ENCODE measurements at regions of chr10 and their contacts with region 1.

Region 1: DNA sequence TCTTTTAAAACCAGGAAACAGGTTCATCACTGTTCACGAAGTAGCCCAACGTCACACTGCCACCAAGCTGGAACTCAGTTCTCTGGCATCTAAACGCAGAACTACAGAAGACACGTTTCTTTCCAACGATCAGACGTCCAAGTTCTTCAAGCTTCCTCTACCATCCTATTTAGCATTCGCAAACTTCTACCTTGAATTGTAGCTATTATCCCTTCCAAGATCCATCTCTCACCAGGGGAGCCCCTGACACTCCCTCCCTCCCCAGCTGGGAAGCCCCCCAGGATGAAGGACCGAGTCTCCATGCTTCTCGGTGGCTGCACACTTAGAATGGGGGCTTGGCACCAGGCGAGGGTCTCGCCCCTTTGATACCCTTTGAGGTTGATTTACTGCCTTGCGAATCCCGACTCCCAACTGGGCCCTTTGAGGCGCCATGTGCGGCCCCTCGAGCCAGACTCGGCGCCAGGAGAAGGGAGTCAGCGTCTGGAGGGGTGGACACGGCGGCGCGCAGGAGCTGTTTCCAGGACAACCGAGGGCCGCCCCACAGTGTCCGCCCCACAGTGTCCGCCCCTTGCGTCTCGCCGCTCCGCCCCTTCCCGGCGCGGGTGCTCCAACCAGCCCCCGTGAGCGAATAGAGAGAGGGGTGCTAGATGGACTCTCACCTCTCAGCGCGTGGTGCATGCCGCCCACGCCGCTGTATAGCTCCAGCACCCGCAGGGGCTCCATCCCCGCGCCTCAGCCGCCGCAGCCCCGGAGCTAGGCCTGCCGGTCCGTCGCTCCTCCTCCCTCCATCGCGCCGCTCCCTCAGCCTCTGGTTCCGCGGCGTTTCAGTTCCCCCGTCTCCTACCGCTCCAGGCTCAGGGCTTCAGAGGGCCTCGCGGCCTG is at the start of gene TRDMT1:
- DNase-seq: peak; percentile 83 to 91 (median 85)
- H3K4me3 ChIP-seq: peak within 1 kb of the TSS; percentile 80 to 92 (median 86)
- H3K4me3 Mint-ChIP-seq: peak within 1 kb of the TSS; percentile 90 to 95
- H3K27ac ChIP-seq: peak within 1 kb of the TSS; percentile 96 to 97
- H3K27ac Mint-ChIP-seq: peak within 1 kb of the TSS; percentile 98 to 100 (median 100)
- H3K4me1 ChIP-seq: peaks cover 16 to 18% of the 10 kb centered on the region in 2 donors
- H3K4me1 Mint-ChIP-seq: peaks cover 29% of the 10 kb centered on the region
- H3K27me3 ChIP-seq: no peaks in the 10 kb centered on the region
- H3K27me3 Mint-ChIP-seq: peaks cover 0 to 1% (median 0%) of the 10 kb centered on the region in 3 donors
- CTCF ChIP-seq: no peak
- polyA plus RNA-seq, gene TRDMT1: 3.1 to 6.6 (median 5.0) TPM

Region 2: GRCh38 chr10:17029581-17030271 is 171.4 kb before region 1 on chr10:
- intact Hi-C with region 1: loop called (anchors 5 kb)
- DNase-seq: peak; percentile 81 to 97 (median 93)
- H3K4me3 ChIP-seq: peak overlapping the region in 2 of 3 experiments; percentile 35 to 56
- H3K4me3 Mint-ChIP-seq: peak overlapping the region; percentile 47 to 71
- H3K27ac ChIP-seq: peak overlapping the region; percentile 64 to 89
- H3K27ac Mint-ChIP-seq: peak overlapping the region; percentile 87 to 96 (median 92)
- H3K4me1 ChIP-seq: peaks cover 74 to 93% of the 10 kb centered on the region in 2 donors
- H3K4me1 Mint-ChIP-seq: peaks cover 75% of the 10 kb centered on the region
- H3K27me3 ChIP-seq: no peaks in the 10 kb centered on the region
- H3K27me3 Mint-ChIP-seq: peaks cover 0 to 2% (median 0%) of the 10 kb centered on the region in 3 donors
- CTCF ChIP-seq: no peak

Region 3: DNA sequence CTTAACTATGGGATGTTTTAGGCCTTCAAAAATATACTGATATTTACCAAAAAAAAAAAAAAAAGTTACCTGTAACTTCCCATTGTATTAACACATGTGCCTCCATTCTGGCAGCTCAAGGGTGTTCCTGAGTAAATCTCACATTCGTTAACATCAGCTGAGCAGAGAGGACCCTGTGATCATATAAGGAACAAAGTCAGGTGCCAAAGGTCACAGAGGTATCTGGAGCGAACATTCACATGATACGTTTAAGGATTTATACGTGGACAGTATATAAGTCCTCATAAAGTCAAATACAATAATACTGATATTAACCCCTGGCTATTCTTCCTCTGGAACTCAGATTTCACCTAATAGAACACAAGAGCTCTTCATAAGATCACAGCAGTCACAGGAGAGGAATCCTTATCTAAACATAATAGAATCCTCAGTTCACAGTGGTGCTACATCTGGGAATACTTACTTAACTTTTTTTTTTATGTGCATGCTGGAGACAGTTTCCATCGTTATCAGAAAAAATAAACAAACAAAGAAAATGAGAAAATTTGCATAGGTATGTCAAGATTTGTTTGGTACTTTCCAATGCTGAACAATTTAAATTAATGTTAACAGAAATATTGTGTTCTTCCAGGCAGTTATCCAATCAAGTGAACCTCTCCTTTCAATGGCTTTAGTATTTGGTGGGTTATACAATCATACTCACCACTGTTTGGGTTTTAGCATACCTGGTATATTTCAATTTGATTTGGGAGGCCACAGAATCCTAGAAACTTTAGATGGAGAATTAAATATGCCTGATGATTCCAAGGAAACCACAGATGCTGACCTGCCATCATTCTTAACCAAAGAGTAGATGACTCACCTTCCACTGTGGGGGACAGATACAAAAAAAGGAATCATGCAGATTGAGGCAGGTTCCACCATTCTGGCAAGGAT is 78.2 kb before region 1 on chr10:
- intact Hi-C with region 1: loop called in 1 of 2 experiments (anchors 10 kb)
- DNase-seq: no peak
- H3K4me3 ChIP-seq: no peak overlapping the region
- H3K4me3 Mint-ChIP-seq: no peak overlapping the region
- H3K27ac ChIP-seq: no peak overlapping the region
- H3K27ac Mint-ChIP-seq: no peak overlapping the region
- H3K4me1 ChIP-seq: peaks cover 14 to 19% of the 10 kb centered on the region in 2 donors
- H3K4me1 Mint-ChIP-seq: peaks cover 16% of the 10 kb centered on the region
- H3K27me3 ChIP-seq: no peaks in the 10 kb centered on the region
- H3K27me3 Mint-ChIP-seq: peaks cover 2 to 3% (median 3%) of the 10 kb centered on the region in 3 donors
- CTCF ChIP-seq: no peak

Region 4: DNA sequence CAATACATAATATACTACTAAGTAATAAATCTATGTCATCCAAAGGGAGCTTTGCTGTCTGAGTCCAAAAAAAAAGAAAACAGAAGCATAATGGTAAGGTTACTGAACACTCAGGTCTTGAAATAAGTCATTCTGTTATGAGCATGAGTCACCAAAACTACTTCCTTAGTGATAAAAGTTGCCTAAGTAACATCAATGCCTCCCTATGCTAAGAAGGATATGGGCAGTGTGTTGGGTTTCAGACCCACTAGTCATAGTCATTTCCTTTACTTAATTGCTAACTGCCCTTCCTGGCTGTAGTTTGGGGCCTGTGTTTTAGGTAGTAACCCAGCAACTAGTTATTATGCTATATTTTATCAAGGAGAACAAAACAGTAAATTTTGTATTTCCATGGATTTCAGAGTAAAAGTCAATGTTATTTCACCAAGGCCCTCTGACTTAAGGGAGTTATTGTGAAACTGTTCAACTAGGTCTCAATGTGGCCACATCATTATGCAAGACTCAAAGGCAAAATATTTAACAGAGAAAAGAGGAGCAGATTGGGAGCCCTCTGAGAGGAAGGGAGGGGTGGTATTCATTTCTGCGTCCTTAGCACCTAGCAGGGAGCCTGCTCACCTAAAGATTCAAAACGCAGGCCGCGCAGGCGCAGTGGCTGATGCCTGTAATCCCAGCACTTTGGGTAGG is 15.2 kb after region 1 on chr10:
- intact Hi-C with region 1: loop called in 1 of 2 experiments (anchors 2 kb)
- DNase-seq: peak; percentile 96 to 100 (median 99)
- H3K4me3 ChIP-seq: peak overlapping the region in 1 of 3 experiments; percentile 23
- H3K4me3 Mint-ChIP-seq: peak overlapping the region; percentile 37 to 71
- H3K27ac ChIP-seq: peak overlapping the region; percentile 100
- H3K27ac Mint-ChIP-seq: peak overlapping the region; percentile 98 to 100 (median 99)
- H3K4me1 ChIP-seq: peaks cover 63 to 66% of the 10 kb centered on the region in 2 donors
- H3K4me1 Mint-ChIP-seq: peaks cover 68% of the 10 kb centered on the region
- H3K27me3 ChIP-seq: no peaks in the 10 kb centered on the region
- H3K27me3 Mint-ChIP-seq: no peaks in the 10 kb centered on the region
- CTCF ChIP-seq: no peak

Region 5: DNA sequence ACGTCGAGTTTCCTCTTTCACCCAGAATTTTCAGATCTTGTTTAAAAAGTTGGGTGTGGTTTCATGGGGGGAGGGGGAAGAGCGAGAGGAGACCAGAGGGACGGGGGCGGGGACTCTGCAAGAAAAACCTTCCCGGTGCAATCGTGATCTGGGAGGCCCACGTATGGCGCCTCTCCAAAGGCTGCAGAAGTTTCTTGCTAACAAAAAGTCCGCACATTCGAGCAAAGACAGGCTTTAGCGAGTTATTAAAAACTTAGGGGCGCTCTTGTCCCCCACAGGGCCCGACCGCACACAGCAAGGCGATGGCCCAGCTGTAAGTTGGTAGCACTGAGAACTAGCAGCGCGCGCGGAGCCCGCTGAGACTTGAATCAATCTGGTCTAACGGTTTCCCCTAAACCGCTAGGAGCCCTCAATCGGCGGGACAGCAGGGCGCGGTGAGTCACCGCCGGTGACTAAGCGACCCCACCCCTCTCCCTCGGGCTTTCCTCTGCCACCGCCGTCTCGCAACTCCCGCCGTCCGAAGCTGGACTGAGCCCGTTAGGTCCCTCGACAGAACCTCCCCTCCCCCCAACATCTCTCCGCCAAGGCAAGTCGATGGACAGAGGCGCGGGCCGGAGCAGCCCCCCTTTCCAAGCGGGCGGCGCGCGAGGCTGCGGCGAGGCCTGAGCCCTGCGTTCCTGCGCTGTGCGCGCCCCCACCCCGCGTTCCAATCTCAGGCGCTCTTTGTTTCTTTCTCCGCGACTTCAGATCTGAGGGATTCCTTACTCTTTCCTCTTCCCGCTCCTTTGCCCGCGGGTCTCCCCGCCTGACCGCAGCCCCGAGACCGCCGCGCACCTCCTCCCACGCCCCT is 27.2 kb after region 1 on chr10 and contains the start of gene VIM:
- intact Hi-C with region 1: loop called in 1 of 2 experiments (anchors 1 kb)
- DNase-seq: peak; percentile 98 to 100 (median 98)
- H3K4me3 ChIP-seq: peak within 1 kb of the TSS; percentile 77 to 100 (median 97)
- H3K4me3 Mint-ChIP-seq: peak within 1 kb of the TSS; percentile 96 to 99
- H3K27ac ChIP-seq: peak within 1 kb of the TSS; percentile 98 to 100
- H3K27ac Mint-ChIP-seq: peak within 1 kb of the TSS; percentile 99 to 100 (median 99)
- H3K4me1 ChIP-seq: peaks cover 40 to 54% of the 10 kb centered on the region in 2 donors
- H3K4me1 Mint-ChIP-seq: peaks cover 47% of the 10 kb centered on the region
- H3K27me3 ChIP-seq: no peaks in the 10 kb centered on the region
- H3K27me3 Mint-ChIP-seq: peaks cover 0 to 16% (median 2%) of the 10 kb centered on the region in 3 donors
- CTCF ChIP-seq: no peak
- polyA plus RNA-seq, gene VIM: 697 to 4,055 (median 932) TPM

Region 6: GRCh38 chr10:17238445-17239291 is 37.5 kb after region 1 on chr10:
- intact Hi-C with region 1: loop called in 1 of 2 experiments (anchors 5 kb)
- DNase-seq: peak; percentile 40 to 64 (median 45)
- H3K4me3 ChIP-seq: no peak overlapping the region
- H3K4me3 Mint-ChIP-seq: no peak overlapping the region
- H3K27ac ChIP-seq: peak overlapping the region; percentile 10 to 33
- H3K27ac Mint-ChIP-seq: peak overlapping the region; percentile 68 to 89 (median 79)
- H3K4me1 ChIP-seq: peaks cover 8 to 17% of the 10 kb centered on the region in 2 donors
- H3K4me1 Mint-ChIP-seq: peaks cover 13% of the 10 kb centered on the region
- H3K27me3 ChIP-seq: no peaks in the 10 kb centered on the region
- H3K27me3 Mint-ChIP-seq: peaks cover 0 to 3% (median 2%) of the 10 kb centered on the region in 3 donors
- CTCF ChIP-seq: no peak